Ascending aorta (tissue), 2 donors: ENCODE measurements at regions of chr5 and their contacts with region 1.

Region 1: GRCh38 chr5:82356808-82357671 is 78.9 kb upstream of the RPS23 start:
- DNase-seq: peak; percentile 33 to 94
- H3K4me3 ChIP-seq: no peak overlapping the region
- H3K27ac ChIP-seq: peak overlapping the region; percentile 78 to 84
- H3K4me1 ChIP-seq: peaks cover 0 to 29% of the 10 kb centered on the region in 2 donors
- H3K27me3 ChIP-seq: no peaks in the 10 kb centered on the region
- CTCF ChIP-seq: no peak

Region 2: GRCh38 chr5:82107267-82107666 is 249.8 kb before region 1 on chr5:
- intact Hi-C with region 1: no loop called
- DNase-seq: no peak
- H3K4me3 ChIP-seq: no peak overlapping the region
- H3K27ac ChIP-seq: no peak overlapping the region
- H3K4me1 ChIP-seq: peaks cover 0 to 10% of the 10 kb centered on the region in 2 donors
- H3K27me3 ChIP-seq: no peaks in the 10 kb centered on the region
- CTCF ChIP-seq: no peak

Region 3: GRCh38 chr5:82396871-82397514 is 40.0 kb after region 1 on chr5:
- intact Hi-C with region 1: loop called (anchors 2 kb)
- DNase-seq: peak; percentile 66 to 95
- H3K4me3 ChIP-seq: no peak overlapping the region
- H3K27ac ChIP-seq: peak overlapping the region; percentile 77 to 80
- H3K4me1 ChIP-seq: peaks cover 4 to 16% of the 10 kb centered on the region in 2 donors
- H3K27me3 ChIP-seq: no peaks in the 10 kb centered on the region
- CTCF ChIP-seq: no peak